Activated naive CD4-positive, alpha-beta T cell treated with anti-CD3 and anti-CD28 coated beads for 36 hours (primary cell): ENCODE measurements at regions of chr13 and their contacts with region 1.

Region 1: GRCh38 chr13:41132512-41133152 is at the start of gene KBTBD6:
- DNase-seq: peak; percentile 98
- H3K4me3 Mint-ChIP-seq: peak within 1 kb of the TSS; percentile 92
- H3K27ac Mint-ChIP-seq: peak within 1 kb of the TSS; percentile 87
- H3K4me1 Mint-ChIP-seq: peaks cover 35% of the 10 kb centered on the region
- H3K27me3 Mint-ChIP-seq: no peaks in the 10 kb centered on the region
- total RNA-seq, gene KBTBD6: 3.9 to 4.0 TPM

Region 2: GRCh38 chr13:40770934-40771618 is 361.6 kb before region 1 on chr13 and contains the start of gene MRPS31:
- CTCF ChIA-PET with region 1: no interaction called
- intact Hi-C with region 1: loop called (anchors 1 kb)
- DNase-seq: peak; percentile 95
- H3K4me3 Mint-ChIP-seq: peak within 1 kb of the TSS; percentile 98
- H3K27ac Mint-ChIP-seq: peak within 1 kb of the TSS; percentile 95
- H3K4me1 Mint-ChIP-seq: peaks cover 33% of the 10 kb centered on the region
- H3K27me3 Mint-ChIP-seq: no peaks in the 10 kb centered on the region
- total RNA-seq, gene MRPS31: 28.4 to 28.8 TPM

Region 3: DNA sequence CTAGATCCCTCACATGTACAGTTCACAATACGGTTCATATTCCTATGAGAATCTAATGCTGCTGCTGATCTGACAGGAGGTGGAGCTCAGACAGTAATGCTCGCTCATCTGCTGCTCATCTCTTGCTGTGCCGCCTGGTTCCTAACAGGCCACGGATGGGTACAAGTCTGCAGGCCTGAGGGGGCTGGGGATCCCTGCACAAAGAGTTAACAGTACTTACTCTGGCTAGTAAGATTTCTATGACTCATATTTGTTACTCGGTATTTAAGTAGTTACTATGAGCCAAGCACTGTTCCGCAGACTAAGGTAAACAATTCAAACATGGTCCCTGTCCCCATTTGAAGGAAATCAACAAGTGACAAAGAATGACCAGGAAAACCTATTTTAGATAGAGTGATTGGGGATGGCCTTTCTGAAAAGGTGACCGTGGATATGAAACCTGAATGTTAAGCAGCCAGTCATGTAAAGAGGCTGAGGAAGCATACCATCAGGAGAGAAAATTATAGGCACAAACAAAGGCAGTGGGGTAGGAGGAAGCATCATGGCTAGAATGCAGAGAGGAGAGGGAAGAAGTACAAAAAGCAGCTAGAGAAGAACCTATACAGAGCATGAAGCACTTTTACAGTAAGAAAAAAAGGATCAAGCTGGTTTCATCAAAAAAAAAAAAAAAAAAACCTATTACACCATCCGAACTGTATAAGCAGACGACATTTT is 91.9 kb before region 1 on chr13:
- CTCF ChIA-PET with region 1: no interaction called
- intact Hi-C with region 1: no loop called
- DNase-seq: no peak
- H3K4me3 Mint-ChIP-seq: no peak overlapping the region
- H3K27ac Mint-ChIP-seq: no peak overlapping the region
- H3K4me1 Mint-ChIP-seq: peaks cover 13% of the 10 kb centered on the region
- H3K27me3 Mint-ChIP-seq: no peaks in the 10 kb centered on the region

Region 4: DNA sequence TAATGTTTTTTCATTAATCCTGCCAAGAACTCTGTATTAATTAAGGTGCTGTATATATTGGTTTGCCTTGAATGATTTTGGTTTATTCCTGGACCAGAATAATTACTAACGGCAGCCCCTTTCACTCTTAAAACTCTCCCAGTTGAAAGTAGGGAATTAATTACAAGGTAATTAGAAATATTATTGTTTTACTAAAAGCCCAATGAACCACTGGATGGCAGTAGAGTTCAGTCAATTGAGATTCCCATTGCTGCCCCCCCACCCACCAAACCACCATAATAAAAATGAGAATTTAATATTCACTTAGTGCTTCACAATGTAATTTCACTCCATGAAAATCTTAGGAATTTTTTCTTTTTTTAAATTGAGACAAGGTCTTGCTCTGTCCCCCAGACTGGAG is 57.6 kb before region 1 on chr13:
- CTCF ChIA-PET with region 1: interaction called, 3 read pairs
- intact Hi-C with region 1: loop called (anchors 5 kb)
- DNase-seq: peak; percentile 26
- H3K4me3 Mint-ChIP-seq: no peak overlapping the region
- H3K27ac Mint-ChIP-seq: no peak overlapping the region
- H3K4me1 Mint-ChIP-seq: no peaks in the 10 kb centered on the region
- H3K27me3 Mint-ChIP-seq: no peaks in the 10 kb centered on the region

Region 5: GRCh38 chr13:41193919-41194824 is 61.5 kb after region 1 on chr13 and contains the start of gene KBTBD7:
- CTCF ChIA-PET with region 1: interaction called, 3 read pairs
- intact Hi-C with region 1: loop called (anchors 1 kb)
- DNase-seq: peak; percentile 95
- H3K4me3 Mint-ChIP-seq: peak within 1 kb of the TSS; percentile 90
- H3K27ac Mint-ChIP-seq: peak within 1 kb of the TSS; percentile 89
- H3K4me1 Mint-ChIP-seq: peaks cover 37% of the 10 kb centered on the region
- H3K27me3 Mint-ChIP-seq: no peaks in the 10 kb centered on the region
- total RNA-seq, gene KBTBD7: 4.2 to 4.3 TPM

Region 6: GRCh38 chr13:41222259-41222852 is 89.7 kb after region 1 on chr13:
- CTCF ChIA-PET with region 1: no interaction called
- intact Hi-C with region 1: loop called (anchors 1 kb)
- DNase-seq: peak; percentile 78
- H3K4me3 Mint-ChIP-seq: no peak overlapping the region
- H3K27ac Mint-ChIP-seq: no peak overlapping the region
- H3K4me1 Mint-ChIP-seq: no peaks in the 10 kb centered on the region
- H3K27me3 Mint-ChIP-seq: no peaks in the 10 kb centered on the region

Region 7: GRCh38 chr13:41263261-41264027 is 130.8 kb after region 1 on chr13 and contains the start of gene MTRF1:
- CTCF ChIA-PET with region 1: no interaction called
- intact Hi-C with region 1: loop called (anchors 1 kb)
- DNase-seq: peak; percentile 84
- H3K4me3 Mint-ChIP-seq: peak within 1 kb of the TSS; percentile 90
- H3K27ac Mint-ChIP-seq: peak within 1 kb of the TSS; percentile 95
- H3K4me1 Mint-ChIP-seq: peaks cover 24% of the 10 kb centered on the region
- H3K27me3 Mint-ChIP-seq: no peaks in the 10 kb centered on the region
- total RNA-seq, gene MTRF1: 23.2 to 28.4 TPM